CD4-positive, alpha-beta memory T cell (primary cell): ENCODE measurements at regions of chr20 and their contacts with region 1.

Region 1: GRCh38 chr20:57391074-57391554 is at the start of gene RBM38:
- DNase-seq: peak; percentile 56 to 78 (median 72)
- H3K4me3 ChIP-seq: peak within 1 kb of the TSS; percentile 81 to 99
- H3K4me3 Mint-ChIP-seq: peak within 1 kb of the TSS; percentile 91 to 100 (median 97)
- H3K27ac ChIP-seq: peak within 1 kb of the TSS; percentile 84
- H3K27ac Mint-ChIP-seq: peak within 1 kb of the TSS; percentile 97 to 100 (median 99)
- H3K4me1 ChIP-seq: peaks cover 50% of the 10 kb centered on the region
- H3K4me1 Mint-ChIP-seq: peaks cover 29 to 64% (median 41%) of the 10 kb centered on the region in 4 donors
- H3K27me3 ChIP-seq: no peaks in the 10 kb centered on the region
- H3K27me3 Mint-ChIP-seq: no peaks in the 10 kb centered on the region
- total RNA-seq, gene RBM38: 76.0 to 79.6 TPM

Region 2: GRCh38 chr20:57351042-57351783 is 39.9 kb before region 1 on chr20 and contains the start of gene RAE1:
- CTCF ChIA-PET with region 1: no interaction called
- POLR2A ChIA-PET with region 1: interaction called, 5 read pairs
- intact Hi-C with region 1: loop called (anchors 2 kb)
- DNase-seq: peak; percentile 90 to 92 (median 91)
- H3K4me3 ChIP-seq: peak within 1 kb of the TSS; percentile 84 to 92
- H3K4me3 Mint-ChIP-seq: peak within 1 kb of the TSS; percentile 87 to 96 (median 92)
- H3K27ac ChIP-seq: peak within 1 kb of the TSS; percentile 91
- H3K27ac Mint-ChIP-seq: peak within 1 kb of the TSS; percentile 87 to 95 (median 91)
- H3K4me1 ChIP-seq: peaks cover 23% of the 10 kb centered on the region
- H3K4me1 Mint-ChIP-seq: peaks cover 11 to 36% (median 23%) of the 10 kb centered on the region in 4 donors
- H3K27me3 ChIP-seq: no peaks in the 10 kb centered on the region
- H3K27me3 Mint-ChIP-seq: peaks cover 0 to 3% of the 10 kb centered on the region in 2 donors
- total RNA-seq, gene RAE1: 30.9 to 33.8 TPM

Region 3: DNA sequence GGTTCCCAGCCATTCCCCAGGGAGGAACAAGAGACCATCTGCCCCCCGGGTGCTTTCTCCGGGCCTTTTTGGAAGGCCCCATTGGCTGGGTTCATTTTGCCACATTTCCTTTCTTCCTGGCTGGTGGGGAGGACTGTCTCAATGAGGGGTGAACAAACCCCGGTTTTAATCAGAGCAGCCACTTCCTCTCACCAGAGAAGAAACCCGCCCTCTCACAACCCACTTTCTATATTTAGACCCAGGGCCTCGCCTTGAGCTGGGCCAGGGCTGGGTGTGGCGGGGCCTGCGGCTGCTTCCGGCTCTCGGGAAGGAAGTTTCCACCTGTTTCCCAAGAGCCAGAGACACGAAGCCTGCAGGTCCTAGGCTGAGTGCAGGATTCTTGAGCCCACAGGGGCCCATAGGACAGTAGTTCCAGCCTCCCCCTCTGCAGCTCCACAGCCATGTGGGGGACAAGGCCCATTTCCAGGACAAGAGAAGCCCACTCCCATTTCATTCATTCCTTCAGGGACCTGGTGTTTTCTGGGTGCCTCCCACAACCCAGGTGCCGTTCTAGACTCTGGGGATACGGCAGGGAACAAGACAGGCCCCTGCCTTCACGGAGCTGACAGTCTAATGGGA is 41.9 kb after region 1 on chr20:
- CTCF ChIA-PET with region 1: interaction called, 92 read pairs
- POLR2A ChIA-PET with region 1: interaction called, 117 read pairs
- intact Hi-C with region 1: loop called (anchors 1 kb)
- DNase-seq: peak; percentile 72 to 81 (median 77)
- H3K4me3 ChIP-seq: peak overlapping the region in 1 of 2 donors; percentile 44
- H3K4me3 Mint-ChIP-seq: peak overlapping the region; percentile 71 to 89 (median 78)
- H3K27ac ChIP-seq: peak overlapping the region; percentile 43
- H3K27ac Mint-ChIP-seq: peak overlapping the region; percentile 83 to 95 (median 92)
- H3K4me1 ChIP-seq: peaks cover 65% of the 10 kb centered on the region
- H3K4me1 Mint-ChIP-seq: peaks cover 39 to 70% (median 61%) of the 10 kb centered on the region in 4 donors
- H3K27me3 ChIP-seq: no peaks in the 10 kb centered on the region
- H3K27me3 Mint-ChIP-seq: no peaks in the 10 kb centered on the region

Region 4: GRCh38 chr20:57498425-57499400 is 107.6 kb after region 1 on chr20:
- CTCF ChIA-PET with region 1: interaction called, 23 read pairs
- POLR2A ChIA-PET with region 1: interaction called, 3 read pairs
- intact Hi-C with region 1: no loop called
- DNase-seq: peak in 3 of 5 donors; percentile 9 to 21 (median 11)
- H3K4me3 ChIP-seq: no peak overlapping the region
- H3K4me3 Mint-ChIP-seq: no peak overlapping the region
- H3K27ac ChIP-seq: no peak overlapping the region
- H3K27ac Mint-ChIP-seq: no peak overlapping the region
- H3K4me1 ChIP-seq: peaks cover 10% of the 10 kb centered on the region
- H3K4me1 Mint-ChIP-seq: peaks cover 10 to 14% (median 11%) of the 10 kb centered on the region in 4 donors
- H3K27me3 ChIP-seq: peaks cover 6% of the 10 kb centered on the region
- H3K27me3 Mint-ChIP-seq: peaks cover 23 to 43% of the 10 kb centered on the region in 2 donors

Region 5: GRCh38 chr20:57509722-57510164 is 118.6 kb after region 1 on chr20:
- CTCF ChIA-PET with region 1: no interaction called
- POLR2A ChIA-PET with region 1: no interaction called
- intact Hi-C with region 1: no loop called
- DNase-seq: no peak
- H3K4me3 ChIP-seq: no peak overlapping the region
- H3K4me3 Mint-ChIP-seq: no peak overlapping the region
- H3K27ac ChIP-seq: no peak overlapping the region
- H3K27ac Mint-ChIP-seq: no peak overlapping the region
- H3K4me1 ChIP-seq: no peaks in the 10 kb centered on the region
- H3K4me1 Mint-ChIP-seq: no peaks in the 10 kb centered on the region
- H3K27me3 ChIP-seq: no peaks in the 10 kb centered on the region
- H3K27me3 Mint-ChIP-seq: peaks cover 9 to 17% of the 10 kb centered on the region in 2 donors

Region 6: GRCh38 chr20:57573890-57574289 is 182.8 kb after region 1 on chr20:
- CTCF ChIA-PET with region 1: no interaction called
- POLR2A ChIA-PET with region 1: no interaction called
- intact Hi-C with region 1: no loop called
- DNase-seq: no peak
- H3K4me3 ChIP-seq: no peak overlapping the region
- H3K4me3 Mint-ChIP-seq: no peak overlapping the region
- H3K27ac ChIP-seq: no peak overlapping the region
- H3K27ac Mint-ChIP-seq: no peak overlapping the region
- H3K4me1 ChIP-seq: no peaks in the 10 kb centered on the region
- H3K4me1 Mint-ChIP-seq: no peaks in the 10 kb centered on the region
- H3K27me3 ChIP-seq: peaks cover 4% of the 10 kb centered on the region
- H3K27me3 Mint-ChIP-seq: peaks cover 12 to 23% of the 10 kb centered on the region in 2 donors

Region 7: DNA sequence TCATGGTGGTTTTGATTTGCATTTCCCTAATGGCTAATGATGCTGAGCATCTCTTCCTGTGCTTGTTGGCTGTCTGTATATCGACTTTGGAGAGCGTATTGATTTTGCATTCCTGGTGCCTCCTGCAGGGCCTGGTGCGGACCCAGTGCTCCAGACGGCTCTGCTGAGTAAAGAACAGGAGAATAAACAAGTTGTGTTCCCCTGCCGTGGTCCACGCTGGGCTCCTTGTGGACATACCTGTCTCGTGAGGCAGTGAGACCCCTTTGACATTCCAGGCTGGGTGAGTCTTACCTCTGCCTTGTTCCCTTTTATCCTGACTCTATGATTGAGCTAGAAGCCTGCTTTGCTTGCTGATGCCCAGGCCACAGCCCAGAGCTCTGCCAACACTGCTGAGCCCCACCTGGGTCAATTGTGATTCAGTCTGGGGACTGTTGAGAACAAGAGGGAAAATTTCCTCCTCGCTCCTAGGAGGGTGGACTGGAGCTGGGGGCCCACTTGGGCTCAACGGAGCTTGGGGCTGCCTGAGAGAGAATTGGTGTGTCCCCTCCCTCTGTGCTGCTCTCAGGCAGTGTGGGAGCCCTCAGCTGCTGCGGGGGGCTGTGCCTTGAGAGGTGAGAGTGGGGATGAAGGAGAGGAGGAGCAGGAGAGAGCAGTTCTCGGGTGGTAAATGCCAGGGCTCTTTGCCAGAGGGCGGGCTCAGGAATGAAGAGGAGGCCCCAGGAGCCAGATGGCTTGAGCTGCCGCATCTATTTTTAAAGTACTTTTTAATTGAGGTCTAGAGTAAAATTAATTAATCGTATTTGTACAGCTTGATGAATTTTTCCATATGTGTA is 362.4 kb after region 1 on chr20:
- CTCF ChIA-PET with region 1: no interaction called
- POLR2A ChIA-PET with region 1: no interaction called
- intact Hi-C with region 1: no loop called
- DNase-seq: no peak
- H3K4me3 ChIP-seq: no peak overlapping the region
- H3K4me3 Mint-ChIP-seq: no peak overlapping the region
- H3K27ac ChIP-seq: no peak overlapping the region
- H3K27ac Mint-ChIP-seq: peak overlapping the region in 1 of 7 donors; percentile 33
- H3K4me1 ChIP-seq: peaks cover 9% of the 10 kb centered on the region
- H3K4me1 Mint-ChIP-seq: peaks cover 1 to 10% (median 5%) of the 10 kb centered on the region in 4 donors
- H3K27me3 ChIP-seq: no peaks in the 10 kb centered on the region
- H3K27me3 Mint-ChIP-seq: peaks cover 8 to 16% of the 10 kb centered on the region in 2 donors

Region 8: DNA sequence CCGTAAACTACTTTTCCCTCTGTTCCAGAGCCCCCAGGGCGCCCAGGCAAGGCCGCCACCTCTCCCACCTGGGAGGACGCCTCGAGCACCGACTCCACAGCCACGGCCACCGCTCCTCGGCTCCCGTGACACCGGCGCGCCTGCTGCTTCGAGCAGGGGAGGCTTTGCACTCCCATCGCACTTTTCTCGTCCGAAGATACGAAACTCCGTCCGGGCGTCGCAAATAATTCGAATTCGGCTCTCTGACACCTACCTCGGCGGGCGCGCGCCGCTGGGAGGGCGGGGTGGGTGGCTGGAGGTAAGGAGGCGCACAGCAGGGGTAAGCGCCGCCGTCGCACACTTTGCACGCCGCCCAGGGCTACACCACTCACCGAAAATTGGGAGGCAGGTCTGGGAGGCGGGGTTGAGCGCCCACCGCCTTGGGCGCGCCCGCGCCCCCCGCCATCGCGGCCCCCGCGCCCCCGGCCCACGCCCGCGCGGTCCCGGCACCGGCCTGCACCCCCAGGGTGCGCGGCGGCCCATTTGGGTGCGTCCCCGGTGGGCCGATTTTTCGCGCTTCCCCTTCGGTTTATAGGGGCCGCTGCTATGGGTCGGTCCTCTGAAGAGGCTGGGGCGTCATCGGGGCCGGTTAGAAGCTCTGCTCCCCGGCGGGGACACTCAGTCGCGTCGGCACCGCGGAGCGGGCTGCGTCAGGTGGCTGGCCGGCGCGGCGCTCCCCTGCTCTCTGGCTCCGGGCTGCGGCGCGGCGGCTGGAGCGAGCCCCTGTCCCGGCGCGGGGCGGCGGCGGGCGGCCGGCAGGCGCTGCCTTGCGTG is 1497.6 kb after region 1 on chr20:
- CTCF ChIA-PET with region 1: no interaction called
- POLR2A ChIA-PET with region 1: no interaction called
- intact Hi-C with region 1: loop called (anchors 10 kb)
- DNase-seq: peak; percentile 87 to 90 (median 89)
- H3K4me3 ChIP-seq: peak overlapping the region; percentile 12 to 64
- H3K4me3 Mint-ChIP-seq: peak overlapping the region; percentile 79 to 90 (median 85)
- H3K27ac ChIP-seq: peak overlapping the region; percentile 78
- H3K27ac Mint-ChIP-seq: peak overlapping the region; percentile 87 to 95 (median 90)
- H3K4me1 ChIP-seq: peaks cover 19% of the 10 kb centered on the region
- H3K4me1 Mint-ChIP-seq: peaks cover 9 to 25% (median 18%) of the 10 kb centered on the region in 4 donors
- H3K27me3 ChIP-seq: no peaks in the 10 kb centered on the region
- H3K27me3 Mint-ChIP-seq: no peaks in the 10 kb centered on the region